Activated T-helper 2 cell treated with anti-CD3 and anti-CD28 coated beads, Interferon-gamma antibody, Interleukin-2, Interleukin-4, amounts not matched to agents 10 μg/mL and 5 μg/mL and 100 μg/mL, durations not matched to agents 14 hours and 24 hours and 36 hours (primary cell): ENCODE measurements at regions of chr1 and their contacts with region 1.

Region 1: DNA sequence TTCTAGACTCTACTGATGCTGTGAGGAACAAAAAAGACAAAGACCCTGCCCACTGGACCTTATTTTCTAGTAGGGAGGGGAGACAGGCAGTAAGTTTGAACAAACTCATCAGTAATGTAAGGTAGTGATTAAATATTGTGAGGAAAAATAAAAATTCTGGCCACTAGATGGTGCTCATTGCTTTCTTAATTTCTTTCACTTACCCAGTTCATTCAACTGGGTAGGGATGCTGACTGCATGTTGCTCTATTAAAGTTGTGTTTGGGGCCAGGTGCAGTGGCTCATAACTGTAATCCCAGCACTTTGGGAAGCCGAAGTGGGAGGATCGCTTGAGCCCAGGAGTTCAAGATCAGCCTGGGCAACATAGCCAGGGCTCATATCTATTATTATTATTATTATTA is 6.3 kb upstream of the KYAT3 start:
- DNase-seq: no peak
- H3K4me3 Mint-ChIP-seq: no peak overlapping the region
- H3K27ac Mint-ChIP-seq: no peak overlapping the region
- H3K4me1 Mint-ChIP-seq: peaks cover 13% of the 10 kb centered on the region
- H3K27me3 Mint-ChIP-seq: peaks cover 4% of the 10 kb centered on the region

Region 2: DNA sequence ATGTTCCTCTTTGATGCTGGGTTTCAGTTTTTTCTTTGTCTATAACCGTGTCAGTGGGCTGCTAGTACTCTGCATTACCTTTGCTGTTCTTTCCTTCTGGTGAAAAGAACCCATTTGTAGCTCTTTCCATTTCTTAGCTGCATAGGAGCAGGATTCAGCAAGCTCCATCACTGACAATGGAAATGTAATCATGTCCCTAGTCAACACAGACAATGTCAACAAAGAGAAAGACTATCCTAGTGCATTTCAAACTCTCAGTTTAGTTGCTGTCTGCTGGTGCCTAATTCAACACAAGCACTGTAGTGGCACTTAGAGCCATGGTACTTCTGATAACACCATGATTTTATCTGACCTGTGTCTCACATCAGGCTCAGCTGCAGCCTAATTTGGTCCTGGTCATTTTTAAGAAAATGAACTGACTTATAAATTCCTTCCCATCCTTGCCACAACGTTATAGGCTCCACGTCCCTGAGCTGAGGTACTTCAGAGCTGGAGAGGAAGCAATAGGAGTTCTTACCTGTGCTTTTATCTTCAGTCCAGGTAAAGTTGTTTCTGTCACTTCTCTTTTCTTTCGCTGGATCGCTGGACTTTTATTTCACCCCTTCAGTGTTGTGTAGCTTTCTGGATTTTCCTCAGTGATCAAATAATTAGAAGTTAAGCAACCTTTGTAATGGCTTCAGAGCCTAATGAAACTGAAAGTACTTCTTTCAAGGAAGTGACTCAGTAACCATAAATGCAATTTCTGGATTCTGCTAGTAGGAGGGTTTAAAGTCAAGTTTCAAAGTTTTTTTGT is 23.6 kb after region 1 on chr1 and contains the start of gene GBP3:
- intact Hi-C with region 1: loop called (anchors 2 kb)
- DNase-seq: no peak
- H3K4me3 Mint-ChIP-seq: peak within 1 kb of the TSS; percentile 93
- H3K27ac Mint-ChIP-seq: peak within 1 kb of the TSS; percentile 79
- H3K4me1 Mint-ChIP-seq: peaks cover 46% of the 10 kb centered on the region
- H3K27me3 Mint-ChIP-seq: no peaks in the 10 kb centered on the region
- total RNA-seq, gene GBP3: 6.4 and 7.5 TPM in 2 replicates

Region 3: DNA sequence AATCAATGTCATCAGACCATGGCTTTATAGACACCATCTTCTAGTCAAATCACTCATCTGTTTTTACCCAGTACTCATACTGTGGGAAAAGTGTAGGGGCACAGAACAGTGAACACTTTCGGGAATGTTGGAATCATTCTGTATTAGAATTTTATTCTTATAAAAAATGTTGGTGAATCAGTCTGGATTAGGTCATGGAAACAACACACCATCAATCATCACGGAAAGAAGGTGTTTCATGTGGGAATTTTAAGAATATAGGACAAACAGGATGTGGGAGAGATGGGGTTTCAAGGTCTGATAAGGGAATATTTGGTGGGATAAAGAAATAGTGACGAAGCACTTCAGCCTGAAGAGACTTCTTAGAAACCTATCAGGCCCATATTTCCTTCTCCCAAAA is 49.0 kb after region 1 on chr1:
- intact Hi-C with region 1: loop called (anchors 2 kb)
- DNase-seq: no peak
- H3K4me3 Mint-ChIP-seq: no peak overlapping the region
- H3K27ac Mint-ChIP-seq: no peak overlapping the region
- H3K4me1 Mint-ChIP-seq: peaks cover 6% of the 10 kb centered on the region
- H3K27me3 Mint-ChIP-seq: no peaks in the 10 kb centered on the region

Region 4: GRCh38 chr1:89085781-89086180 is 87.1 kb after region 1 on chr1:
- intact Hi-C with region 1: loop called (anchors 2 kb)
- DNase-seq: peak; percentile 51
- H3K4me3 Mint-ChIP-seq: no peak overlapping the region
- H3K27ac Mint-ChIP-seq: no peak overlapping the region
- H3K4me1 Mint-ChIP-seq: peaks cover 14% of the 10 kb centered on the region
- H3K27me3 Mint-ChIP-seq: peaks cover 8% of the 10 kb centered on the region